Common myeloid progenitor, CD34-positive (primary cell): ENCODE measurements at regions of chr1 and their contacts with region 1.

Region 1: DNA sequence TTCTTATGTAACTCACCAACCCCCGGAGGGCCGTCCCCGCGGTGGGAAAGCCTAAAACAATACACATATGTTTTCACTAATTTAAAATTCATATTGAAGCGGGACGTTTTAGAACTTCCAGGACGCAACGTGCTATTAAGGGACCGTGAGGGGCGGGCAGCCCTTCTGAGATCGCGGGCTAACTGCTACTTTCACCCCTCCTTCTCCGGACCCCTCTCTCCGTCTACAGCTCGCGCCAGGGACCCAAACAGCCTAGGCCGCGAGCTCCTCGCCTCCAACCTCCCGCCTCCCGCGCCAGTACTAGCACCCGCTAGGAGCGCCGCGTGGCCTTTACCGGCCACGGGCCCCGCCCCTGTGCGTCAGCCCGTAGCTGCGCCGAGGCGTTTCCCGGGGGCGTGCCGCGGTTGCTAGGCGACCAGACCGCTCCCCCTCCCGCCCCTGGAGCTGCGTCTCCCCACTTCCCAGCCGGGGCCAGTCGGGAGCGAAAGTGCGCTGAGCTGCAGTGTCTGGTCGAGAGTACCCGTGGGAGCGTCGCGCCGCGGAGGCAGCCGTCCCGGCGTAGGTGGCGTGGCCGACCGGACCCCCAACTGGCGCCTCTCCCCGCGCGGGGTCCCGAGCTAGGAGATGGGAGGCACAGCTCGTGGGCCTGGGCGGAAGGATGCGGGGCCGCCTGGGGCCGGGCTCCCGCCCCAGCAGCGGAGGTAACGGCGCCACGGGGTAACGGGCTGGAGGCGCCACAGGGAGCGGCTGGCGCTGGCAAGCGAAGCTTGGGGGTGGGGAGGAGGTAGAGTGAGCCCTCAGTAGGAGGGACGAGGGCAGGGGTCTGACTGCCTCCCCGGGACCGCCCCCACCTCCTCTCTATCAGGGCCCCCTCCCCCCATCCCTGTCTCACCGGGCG is at the start of gene DYRK3:
- DNase-seq: peak; percentile 91 to 93 (median 92)
- H3K4me3 ChIP-seq: peak within 1 kb of the TSS; percentile 76 to 98 (median 85)
- H3K27ac ChIP-seq: peak within 1 kb of the TSS; percentile 82 to 86
- H3K4me1 ChIP-seq: peaks cover 11 to 29% (median 22%) of the 10 kb centered on the region in 4 experiments
- H3K27me3 ChIP-seq: no peaks in the 10 kb centered on the region

Region 2: GRCh38 chr1:206489980-206490770 is 145.2 kb before region 1 on chr1:
- CTCF ChIA-PET with region 1: no interaction called
- POLR2A ChIA-PET with region 1: no interaction called
- DNase-seq: peak; percentile 60 to 78 (median 70)
- H3K4me3 ChIP-seq: no peak overlapping the region
- H3K27ac ChIP-seq: no peak overlapping the region
- H3K4me1 ChIP-seq: peaks cover 0 to 6% (median 3%) of the 10 kb centered on the region in 4 experiments
- H3K27me3 ChIP-seq: no peaks in the 10 kb centered on the region

Region 3: DNA sequence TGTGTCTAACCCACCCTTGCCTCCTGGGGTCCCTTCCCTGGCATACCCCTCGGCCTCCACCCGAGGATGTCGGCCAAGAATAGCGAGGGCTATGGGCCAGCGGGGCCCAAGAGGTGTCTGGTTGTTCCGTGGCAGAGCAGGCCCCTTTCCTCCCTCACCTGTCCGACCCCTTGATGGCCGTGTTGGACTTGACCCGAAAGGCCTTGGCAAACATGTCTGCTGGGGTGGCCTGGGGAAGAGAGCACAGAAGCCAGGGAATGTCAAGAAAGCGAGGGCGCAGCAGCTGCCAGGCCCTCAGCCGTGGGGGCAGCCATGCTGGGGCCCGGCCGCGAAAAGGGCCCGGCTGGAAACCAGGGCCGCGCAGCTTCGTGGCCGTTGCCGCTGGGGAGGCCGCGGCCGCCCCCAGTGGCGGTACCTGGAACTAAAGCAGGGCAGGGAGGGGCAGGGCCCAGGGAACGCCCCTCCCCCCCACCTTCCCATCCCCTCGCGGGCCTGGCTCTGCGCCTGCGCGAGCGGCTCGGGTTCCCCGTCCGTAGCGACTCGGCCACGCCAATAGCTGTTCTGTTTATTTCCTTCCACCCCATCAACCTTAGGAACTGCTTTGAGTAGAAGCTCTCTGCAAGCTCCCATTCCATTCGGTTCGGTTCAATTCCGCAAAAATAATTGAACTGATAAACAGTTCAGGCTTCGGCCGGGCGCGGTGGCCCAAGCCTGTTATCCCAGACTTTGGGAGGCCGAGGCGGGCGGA is 23.0 kb before region 1 on chr1 and contains the start of gene EIF2D:
- CTCF ChIA-PET with region 1: interaction called, 40 read pairs
- POLR2A ChIA-PET with region 1: interaction called, 5 read pairs
- DNase-seq: peak; percentile 91 to 95 (median 94)
- H3K4me3 ChIP-seq: peak within 1 kb of the TSS; percentile 46 to 97 (median 89)
- H3K27ac ChIP-seq: peak within 1 kb of the TSS; percentile 96 to 98
- H3K4me1 ChIP-seq: peaks cover 6 to 30% (median 17%) of the 10 kb centered on the region in 4 experiments
- H3K27me3 ChIP-seq: no peaks in the 10 kb centered on the region